Endothelial cell of umbilical vein (primary cell): ENCODE measurements at regions of chr9 and their contacts with region 1.

Region 1: DNA sequence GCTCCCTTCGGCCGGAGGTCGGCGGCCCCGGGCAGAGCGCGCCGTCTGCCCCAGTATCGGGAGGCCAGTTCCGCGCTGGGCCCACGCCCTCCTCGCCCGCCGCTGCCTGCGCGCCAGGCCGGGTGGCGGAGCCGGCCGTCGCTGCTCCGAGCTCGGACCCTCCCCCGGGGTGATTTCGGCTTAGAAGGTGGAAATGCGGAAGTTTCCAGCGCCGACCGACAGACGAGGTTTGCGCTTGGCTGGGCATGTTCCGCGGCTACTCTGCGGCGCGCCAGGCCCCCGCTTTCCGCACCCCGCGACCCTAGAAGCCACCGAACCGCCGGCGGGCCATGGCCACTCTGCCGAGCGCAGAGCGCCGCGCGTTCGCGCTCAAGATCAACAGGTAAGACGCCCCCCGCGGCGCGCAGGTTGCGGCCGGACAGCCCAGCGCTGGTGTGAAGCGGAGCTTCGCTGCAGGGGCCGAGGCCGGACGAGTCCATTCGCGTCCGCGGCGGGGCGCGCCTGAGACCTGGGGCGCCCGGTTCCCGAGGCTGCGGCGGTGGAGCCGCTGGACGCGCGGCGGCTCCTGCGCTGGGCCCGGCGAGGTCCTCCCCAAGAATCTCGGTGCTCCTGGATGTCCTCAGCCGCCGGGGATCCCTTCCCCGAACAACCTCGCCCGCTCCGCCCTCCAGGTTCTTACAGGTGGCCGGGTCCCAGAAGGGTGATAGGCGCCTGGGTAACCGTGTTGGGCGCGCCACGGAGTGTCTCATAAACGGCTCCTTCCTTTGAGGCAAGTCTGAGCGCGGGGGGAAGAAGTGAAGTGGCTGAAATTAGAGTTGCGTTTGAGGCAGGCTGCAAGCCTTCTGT is at the start of gene DOCK8:
- DNase-seq: peak; percentile 24
- H3K4me3 ChIP-seq: peak within 1 kb of the TSS; percentile 51 to 54 (median 51)
- H3K27ac ChIP-seq: no peak within 1 kb of the TSS
- H3K4me1 ChIP-seq: peaks cover 3% of the 10 kb centered on the region
- H3K27me3 ChIP-seq: peaks cover 4 to 31% of the 10 kb centered on the region in 2 experiments
- CTCF ChIP-seq: peak; percentile 25 to 53
- POLR2A ChIP-seq: no peak
- total RNA-seq, gene DOCK8: 1.3 and 12.0 TPM in 2 replicates

Region 2: GRCh38 chr9:306887-307286 is 92.0 kb after region 1 on chr9:
- CTCF ChIA-PET with region 1: no interaction called
- POLR2A ChIA-PET with region 1: no interaction called
- dilution Hi-C with region 1: no loop called
- intact Hi-C with region 1: loop called (anchors 2 kb)
- DNase-seq: no peak
- H3K4me3 ChIP-seq: no peak overlapping the region
- H3K27ac ChIP-seq: no peak overlapping the region
- H3K4me1 ChIP-seq: no peaks in the 10 kb centered on the region
- H3K27me3 ChIP-seq: no peaks in the 10 kb centered on the region
- CTCF ChIP-seq: no peak
- POLR2A ChIP-seq: no peak

Region 3: DNA sequence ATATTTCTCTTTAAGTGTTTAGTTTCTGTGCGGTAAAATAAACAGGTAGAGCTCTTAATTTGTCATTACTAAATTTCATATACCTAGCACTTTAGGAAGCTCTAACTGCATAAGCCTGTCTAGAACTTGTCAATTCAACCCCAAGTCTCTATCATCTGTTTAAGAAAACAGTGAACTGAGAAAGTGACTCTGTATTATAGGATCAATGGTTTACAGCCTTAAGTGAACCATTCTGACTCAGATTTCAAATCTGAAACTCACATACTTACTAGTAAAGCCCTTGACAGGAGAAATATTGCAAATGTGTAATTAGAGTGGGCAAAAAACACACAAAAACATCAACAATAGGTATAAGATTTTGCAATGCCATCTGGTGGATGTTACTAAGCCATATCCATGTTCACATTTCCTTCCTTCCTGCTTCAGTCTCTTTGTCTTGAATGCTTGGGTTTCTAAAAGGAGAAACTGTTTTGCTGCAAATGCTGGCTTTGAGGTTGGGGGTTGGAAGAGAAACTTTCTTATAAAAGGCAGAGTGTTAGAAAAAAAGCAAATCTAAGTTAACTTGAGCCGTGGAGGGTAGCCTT is 101.6 kb after region 1 on chr9:
- CTCF ChIA-PET with region 1: interaction called, 8 read pairs
- POLR2A ChIA-PET with region 1: no interaction called
- dilution Hi-C with region 1: no loop called
- intact Hi-C with region 1: loop called (anchors 2 kb)
- DNase-seq: peak; percentile 40
- H3K4me3 ChIP-seq: no peak overlapping the region
- H3K27ac ChIP-seq: no peak overlapping the region
- H3K4me1 ChIP-seq: peaks cover 11% of the 10 kb centered on the region
- H3K27me3 ChIP-seq: no peaks in the 10 kb centered on the region
- CTCF ChIP-seq: no peak
- POLR2A ChIP-seq: no peak

Region 4: GRCh38 chr9:1031951-1032601 is 817.2 kb after region 1 on chr9:
- CTCF ChIA-PET with region 1: no interaction called
- POLR2A ChIA-PET with region 1: no interaction called
- dilution Hi-C with region 1: no loop called
- intact Hi-C with region 1: no loop called
- DNase-seq: no peak
- H3K4me3 ChIP-seq: no peak overlapping the region
- H3K27ac ChIP-seq: no peak overlapping the region
- H3K4me1 ChIP-seq: no peaks in the 10 kb centered on the region
- H3K27me3 ChIP-seq: no peaks in the 10 kb centered on the region
- CTCF ChIP-seq: no peak
- POLR2A ChIP-seq: no peak